ENCODE measurements at regions of chr1 and their contacts with region 1.

Region 1: DNA sequence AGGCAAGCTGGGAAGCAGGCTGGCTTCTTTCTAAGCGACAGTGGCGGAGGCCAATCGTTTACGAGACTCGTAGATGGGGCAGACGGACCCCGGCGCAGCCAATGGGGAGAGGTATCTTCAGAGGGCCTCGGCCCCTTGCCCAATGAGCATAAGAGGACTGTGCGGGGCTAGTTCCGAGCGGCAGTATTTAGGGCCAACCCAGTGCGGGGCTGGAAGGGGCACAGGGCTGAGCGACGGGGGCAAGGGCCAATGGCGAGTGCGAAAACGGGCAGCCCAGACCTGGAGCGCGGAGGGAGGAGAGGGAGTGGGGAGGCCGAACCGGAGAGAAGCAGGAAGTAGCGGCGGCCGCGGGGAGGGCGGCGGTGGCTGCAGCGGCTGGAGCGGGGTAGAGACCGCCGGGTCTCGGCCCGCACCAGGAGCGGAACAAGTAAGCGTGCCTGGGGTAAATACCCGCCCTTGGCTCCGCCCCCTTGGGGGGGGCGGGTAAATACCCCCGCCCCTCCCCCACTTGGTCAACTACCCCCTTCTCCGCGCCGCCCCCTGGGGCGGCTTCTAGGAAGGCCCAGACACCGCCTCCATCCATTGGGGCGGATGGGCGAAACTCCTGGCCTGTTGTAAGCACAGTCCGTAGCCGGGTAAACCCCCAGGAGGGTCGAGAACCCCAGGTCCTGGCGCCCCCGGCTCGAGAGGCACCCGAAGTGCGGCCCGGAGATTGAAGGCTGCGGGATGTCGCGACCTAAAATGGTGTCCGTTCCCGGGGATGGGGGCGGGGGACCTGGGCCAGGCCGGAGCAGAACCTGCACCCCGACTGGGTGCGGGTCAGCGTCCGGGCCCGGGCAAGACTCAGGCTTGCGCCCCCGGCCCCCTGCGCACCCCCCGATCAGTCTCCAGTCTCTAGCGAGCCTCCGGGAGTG is at the start of gene ZNF687:
- DNase-seq: peak; percentile 100
- ATAC-seq: peak; percentile 90
- H3K4me3 Mint-ChIP-seq: peak within 1 kb of the TSS; percentile 96
- H3K27ac Mint-ChIP-seq: peak within 1 kb of the TSS; percentile 100
- H3K4me1 Mint-ChIP-seq: peaks cover 26% of the 10 kb centered on the region
- H3K27me3 Mint-ChIP-seq: no peaks in the 10 kb centered on the region
- CTCF ChIP-seq: no peak
- total RNA-seq, gene ZNF687: 27.3 to 29.5 TPM

Region 2: DNA sequence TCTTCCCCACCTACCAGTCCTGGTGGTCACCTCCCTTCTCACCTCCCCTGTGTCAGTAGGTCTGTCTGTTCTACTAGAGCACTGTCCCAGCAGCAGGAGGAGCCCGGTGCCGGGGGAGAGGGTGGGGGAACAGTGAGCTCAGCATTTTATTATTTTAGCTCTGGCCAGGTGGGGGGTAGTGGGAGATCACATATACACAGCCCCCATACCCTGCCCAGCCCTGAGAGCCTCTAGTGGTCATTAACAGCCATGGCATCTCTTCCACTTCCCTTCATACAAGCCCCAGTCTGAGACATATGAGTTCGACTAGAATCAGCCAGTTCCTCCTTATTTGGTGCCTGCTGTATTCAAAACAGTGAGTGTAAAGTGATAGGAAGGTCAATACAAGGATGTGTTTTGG is 106.3 kb before region 1 on chr1 and contains the start of gene TMOD4:
- CTCF ChIA-PET with region 1: no interaction called
- POLR2A ChIA-PET with region 1: no interaction called
- intact Hi-C with region 1: no loop called
- DNase-seq: no peak
- ATAC-seq: peak; percentile 80
- H3K4me3 Mint-ChIP-seq: no peak within 1 kb of the TSS
- H3K27ac Mint-ChIP-seq: peak within 1 kb of the TSS; percentile 70
- H3K4me1 Mint-ChIP-seq: no peaks in the 10 kb centered on the region
- H3K27me3 Mint-ChIP-seq: no peaks in the 10 kb centered on the region
- CTCF ChIP-seq: peak; percentile 63
- total RNA-seq, gene TMOD4: 1.9 to 2.5 TPM

Region 3: GRCh38 chr1:151254217-151255213 is 27.7 kb before region 1 on chr1 and contains the start of gene PSMD4:
- CTCF ChIA-PET with region 1: interaction called, 8 read pairs
- POLR2A ChIA-PET with region 1: interaction called, 11 read pairs
- intact Hi-C with region 1: no loop called
- DNase-seq: peak; percentile 96
- ATAC-seq: peak; percentile 94
- H3K4me3 Mint-ChIP-seq: peak within 1 kb of the TSS; percentile 83
- H3K27ac Mint-ChIP-seq: peak within 1 kb of the TSS; percentile 88
- H3K4me1 Mint-ChIP-seq: peaks cover 27% of the 10 kb centered on the region
- H3K27me3 Mint-ChIP-seq: no peaks in the 10 kb centered on the region
- CTCF ChIP-seq: no peak
- total RNA-seq, gene PSMD4: 203 to 214 TPM

Region 4: DNA sequence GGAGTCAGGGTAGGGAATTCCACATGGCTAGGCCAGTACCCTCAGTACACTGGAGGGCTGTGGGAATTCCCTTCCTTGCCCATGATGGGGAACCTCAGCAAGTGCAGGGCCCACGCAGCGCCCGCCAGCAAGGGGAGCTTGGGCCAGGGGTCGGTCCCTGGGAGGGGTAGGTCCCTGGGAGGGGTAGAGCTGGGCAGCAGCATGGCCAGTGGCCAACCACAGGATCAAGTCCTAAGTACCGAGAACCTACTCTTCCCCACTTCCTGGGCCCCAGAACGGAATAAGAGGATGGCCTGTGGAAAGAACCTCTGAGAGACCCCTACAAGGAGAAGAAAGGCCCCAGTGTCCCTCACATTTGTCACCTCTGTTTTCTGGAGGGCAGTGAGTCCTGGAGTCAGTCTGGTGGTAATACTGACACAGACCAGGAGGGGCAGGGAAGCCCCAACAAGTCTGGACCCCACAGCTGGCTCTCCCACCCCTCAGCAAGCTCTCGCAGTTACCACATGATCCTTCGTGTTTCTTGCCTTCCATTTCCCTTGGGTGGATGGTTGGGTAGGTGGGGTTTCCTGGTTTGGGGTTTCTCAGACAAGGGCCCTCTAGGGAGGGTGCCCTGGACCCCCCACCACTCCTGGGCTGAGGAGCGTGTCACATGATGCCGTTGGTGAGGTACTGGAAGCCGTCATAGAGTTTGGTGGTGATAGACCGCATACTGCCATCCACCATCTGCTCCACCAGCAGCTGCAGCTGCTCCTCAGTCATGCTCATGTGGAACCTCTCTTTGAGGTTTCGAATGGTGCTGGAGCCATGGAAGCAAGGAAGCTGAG is 10.2 kb after region 1 on chr1:
- CTCF ChIA-PET with region 1: interaction called, 5 read pairs
- POLR2A ChIA-PET with region 1: interaction called, 35 read pairs
- intact Hi-C with region 1: no loop called
- DNase-seq: peak; percentile 30
- ATAC-seq: peak; percentile 52
- H3K4me3 Mint-ChIP-seq: no peak overlapping the region
- H3K27ac Mint-ChIP-seq: peak overlapping the region; percentile 71
- H3K4me1 Mint-ChIP-seq: peaks cover 2% of the 10 kb centered on the region
- H3K27me3 Mint-ChIP-seq: no peaks in the 10 kb centered on the region
- CTCF ChIP-seq: peak; percentile 27

Region 5: GRCh38 chr1:151311589-151312331 is 29.5 kb after region 1 on chr1:
- CTCF ChIA-PET with region 1: interaction called, 4 read pairs
- POLR2A ChIA-PET with region 1: interaction called, 12 read pairs
- intact Hi-C with region 1: no loop called
- DNase-seq: peak; percentile 93
- ATAC-seq: peak; percentile 100
- H3K4me3 Mint-ChIP-seq: peak overlapping the region; percentile 0
- H3K27ac Mint-ChIP-seq: peak overlapping the region; percentile 97
- H3K4me1 Mint-ChIP-seq: peaks cover 27% of the 10 kb centered on the region
- H3K27me3 Mint-ChIP-seq: no peaks in the 10 kb centered on the region
- CTCF ChIP-seq: no peak

Region 6: GRCh38 chr1:151399890-151400495 is 117.8 kb after region 1 on chr1:
- CTCF ChIA-PET with region 1: no interaction called
- POLR2A ChIA-PET with region 1: interaction called, 9 read pairs
- intact Hi-C with region 1: loop called (anchors 10 kb)
- DNase-seq: peak; percentile 38
- ATAC-seq: peak; percentile 8
- H3K4me3 Mint-ChIP-seq: peak overlapping the region; percentile 86
- H3K27ac Mint-ChIP-seq: peak overlapping the region; percentile 96
- H3K4me1 Mint-ChIP-seq: peaks cover 35% of the 10 kb centered on the region
- H3K27me3 Mint-ChIP-seq: no peaks in the 10 kb centered on the region
- CTCF ChIP-seq: no peak